Transverse colon (tissue), 4 donors: ENCODE measurements at regions of chr11 and their contacts with region 1.

Region 1: DNA sequence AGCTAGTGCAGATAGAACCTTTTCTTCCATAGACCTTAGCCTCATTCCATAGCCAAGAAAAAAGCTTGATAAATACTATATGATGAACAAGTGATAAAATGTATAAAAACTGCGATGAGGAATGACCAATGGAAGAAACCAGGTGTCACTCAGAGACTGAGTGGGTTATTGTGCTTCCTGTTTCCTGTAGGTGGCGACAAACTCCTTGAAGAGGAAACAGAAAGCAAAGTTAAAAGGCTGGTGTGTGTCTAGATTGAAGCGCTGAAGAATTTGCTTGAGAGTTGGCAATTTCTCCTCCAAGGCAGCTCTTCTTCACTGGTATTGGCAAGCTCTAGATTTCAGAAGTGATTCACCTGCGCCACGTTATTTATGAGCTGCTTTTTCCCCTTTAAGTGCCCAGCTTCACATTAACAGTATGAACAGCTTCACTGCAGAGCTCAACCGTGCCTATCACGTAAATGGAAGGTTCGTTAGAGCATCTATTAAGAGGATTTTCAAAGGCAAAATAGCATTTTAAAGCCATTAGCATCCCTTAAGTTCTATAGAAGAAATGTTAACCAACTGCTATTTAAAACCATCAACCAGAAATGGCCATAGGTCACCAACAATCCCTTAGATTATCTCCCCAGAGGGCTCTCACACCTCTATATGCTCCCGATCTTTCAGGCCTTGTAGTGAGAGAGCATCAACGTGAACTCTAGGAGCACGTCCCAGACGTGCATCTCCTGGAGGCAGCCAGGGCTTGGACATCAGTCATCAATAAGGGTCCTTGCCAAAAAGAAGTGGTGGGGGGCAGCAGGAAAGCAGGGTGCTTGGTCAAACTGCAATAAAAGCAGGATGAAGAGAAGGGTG is 179.4 kb downstream of the CADM1 start:
- DNase-seq: peak; percentile 18
- H3K4me3 ChIP-seq: peak overlapping the region in 1 of 4 donors; percentile 14
- H3K27ac ChIP-seq: no peak overlapping the region
- H3K4me1 ChIP-seq: peaks cover 0 to 4% (median 0%) of the 10 kb centered on the region in 4 donors
- H3K27me3 ChIP-seq: no peaks in the 10 kb centered on the region
- CTCF ChIP-seq: peak; percentile 69 to 77 (median 73)
- EP300 ChIP-seq: no peak
- POLR2A ChIP-seq: no peak

Region 2: DNA sequence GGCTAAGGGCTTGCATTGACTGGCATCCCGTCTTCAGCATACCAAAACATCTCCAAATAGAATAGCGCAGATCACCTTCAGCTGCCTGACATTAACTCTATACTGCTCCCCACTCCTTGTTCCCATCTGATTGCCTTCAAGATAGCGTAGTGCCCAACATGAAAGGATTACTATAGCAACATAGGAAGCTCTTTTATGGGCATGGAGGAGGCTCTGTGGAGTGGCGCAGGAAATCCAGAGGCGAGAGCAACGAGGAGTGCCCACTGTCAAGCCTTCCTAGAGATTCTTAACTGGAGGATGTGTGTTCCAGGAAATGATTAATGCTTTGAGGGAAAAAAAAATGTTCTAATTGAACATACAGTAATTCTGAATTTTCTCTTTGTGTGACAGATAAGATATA is 33.9 kb before region 1 on chr11:
- in situ Hi-C with region 1: no loop called
- intact Hi-C with region 1: no loop called
- DNase-seq: no peak
- H3K4me3 ChIP-seq: no peak overlapping the region
- H3K27ac ChIP-seq: no peak overlapping the region
- H3K4me1 ChIP-seq: no peaks in the 10 kb centered on the region
- H3K27me3 ChIP-seq: no peaks in the 10 kb centered on the region
- CTCF ChIP-seq: no peak
- EP300 ChIP-seq: no peak
- POLR2A ChIP-seq: no peak

Region 3: GRCh38 chr11:115421352-115421991 is 96.7 kb after region 1 on chr11:
- in situ Hi-C with region 1: no loop called
- intact Hi-C with region 1: no loop called
- DNase-seq: no peak
- H3K4me3 ChIP-seq: no peak overlapping the region
- H3K27ac ChIP-seq: no peak overlapping the region
- H3K4me1 ChIP-seq: no peaks in the 10 kb centered on the region
- H3K27me3 ChIP-seq: peaks cover 84% of the 10 kb centered on the region
- CTCF ChIP-seq: no peak
- EP300 ChIP-seq: no peak
- POLR2A ChIP-seq: no peak

Region 4: DNA sequence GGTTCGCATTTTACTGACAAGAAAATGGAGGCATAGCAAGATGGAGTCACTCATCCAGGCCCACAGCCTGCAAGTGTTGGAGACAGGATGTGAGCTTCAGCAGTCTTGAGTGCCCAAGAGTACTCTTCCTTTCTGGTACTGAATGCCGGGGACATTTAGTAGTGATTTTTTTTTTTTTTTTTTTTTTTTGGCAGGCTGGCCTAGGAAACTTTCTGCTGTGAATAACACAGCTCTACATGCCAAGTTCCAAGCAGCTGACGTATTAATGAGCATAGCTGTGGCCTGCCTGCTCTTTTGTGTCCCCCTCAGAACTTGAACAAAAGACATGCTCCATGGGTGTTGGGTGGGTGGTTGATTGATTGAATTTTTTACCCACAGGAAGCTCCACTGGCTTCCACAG is 374.9 kb after region 1 on chr11:
- in situ Hi-C with region 1: loop called in 3 of 4 experiments (anchors 25 kb)
- intact Hi-C with region 1: no loop called
- DNase-seq: no peak
- H3K4me3 ChIP-seq: no peak overlapping the region
- H3K27ac ChIP-seq: peak overlapping the region in 3 of 4 donors; percentile 31 to 58 (median 34)
- H3K4me1 ChIP-seq: peaks cover 0 to 18% (median 4%) of the 10 kb centered on the region in 4 donors
- H3K27me3 ChIP-seq: no peaks in the 10 kb centered on the region
- CTCF ChIP-seq: no peak
- EP300 ChIP-seq: no peak
- POLR2A ChIP-seq: no peak

Region 5: GRCh38 chr11:115784796-115785521 is 460.2 kb after region 1 on chr11:
- in situ Hi-C with region 1: no loop called
- intact Hi-C with region 1: loop called (anchors 5 kb)
- DNase-seq: peak; percentile 32
- H3K4me3 ChIP-seq: no peak overlapping the region
- H3K27ac ChIP-seq: no peak overlapping the region
- H3K4me1 ChIP-seq: no peaks in the 10 kb centered on the region
- H3K27me3 ChIP-seq: no peaks in the 10 kb centered on the region
- CTCF ChIP-seq: no peak
- EP300 ChIP-seq: no peak
- POLR2A ChIP-seq: no peak

Region 6: DNA sequence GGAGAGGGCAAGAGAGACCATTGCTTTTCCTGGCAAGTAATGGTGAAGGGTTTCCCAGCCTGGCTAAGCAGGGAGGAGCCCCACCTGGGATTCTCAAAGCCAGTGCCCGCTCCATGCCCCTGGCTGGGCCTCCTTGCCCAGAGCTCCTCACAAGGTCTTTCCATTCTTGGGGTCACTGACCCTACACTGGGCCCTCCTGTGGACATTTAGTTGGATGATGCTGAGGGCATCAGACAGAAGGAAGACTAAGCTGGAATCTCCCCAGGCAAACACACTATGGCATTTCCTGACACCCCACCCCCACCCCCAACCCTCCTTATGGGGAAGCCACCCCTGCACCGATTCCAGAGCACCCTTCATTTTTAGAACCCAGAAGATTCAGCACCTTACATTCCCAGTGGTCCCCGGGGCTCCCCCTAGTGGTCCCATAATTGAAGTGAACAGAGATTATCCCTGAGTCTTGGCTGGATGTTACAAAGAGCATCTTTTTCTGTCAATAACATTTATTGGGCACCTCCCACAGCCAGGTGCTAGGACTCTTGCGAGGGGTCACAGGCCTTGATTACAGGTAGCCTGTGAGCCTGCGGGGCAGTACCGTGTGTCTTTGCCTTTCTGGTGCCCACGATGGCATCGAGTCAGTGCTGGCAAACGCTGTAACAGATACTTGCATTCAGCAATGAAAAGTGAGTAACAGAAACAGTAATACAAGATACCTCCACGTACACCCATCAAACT is 899.5 kb after region 1 on chr11:
- in situ Hi-C with region 1: loop called in 2 of 4 experiments (anchors 25 kb)
- intact Hi-C with region 1: no loop called
- DNase-seq: peak; percentile 44
- H3K4me3 ChIP-seq: no peak overlapping the region
- H3K27ac ChIP-seq: no peak overlapping the region
- H3K4me1 ChIP-seq: no peaks in the 10 kb centered on the region
- H3K27me3 ChIP-seq: no peaks in the 10 kb centered on the region
- CTCF ChIP-seq: peak; percentile 42 to 72 (median 64)
- EP300 ChIP-seq: no peak
- POLR2A ChIP-seq: no peak

Region 7: GRCh38 chr11:116232364-116232828 is 907.6 kb after region 1 on chr11:
- in situ Hi-C with region 1: loop called in 1 of 4 experiments (anchors 25 kb)
- intact Hi-C with region 1: no loop called
- DNase-seq: peak; percentile 23
- H3K4me3 ChIP-seq: no peak overlapping the region
- H3K27ac ChIP-seq: peak overlapping the region in 1 of 4 donors; percentile 10
- H3K4me1 ChIP-seq: peaks cover 0 to 7% (median 0%) of the 10 kb centered on the region in 4 donors
- H3K27me3 ChIP-seq: no peaks in the 10 kb centered on the region
- CTCF ChIP-seq: no peak
- EP300 ChIP-seq: no peak
- POLR2A ChIP-seq: no peak

Region 8: GRCh38 chr11:116276051-116277044 is 951.5 kb after region 1 on chr11:
- in situ Hi-C with region 1: loop called in 2 of 4 experiments (anchors 10 to 25 kb)
- intact Hi-C with region 1: loop called (anchors 5 kb)
- DNase-seq: peak; percentile 86
- H3K4me3 ChIP-seq: peak overlapping the region in 3 of 4 donors; percentile 16 to 32 (median 20)
- H3K27ac ChIP-seq: no peak overlapping the region
- H3K4me1 ChIP-seq: peaks cover 0 to 4% (median 0%) of the 10 kb centered on the region in 4 donors
- H3K27me3 ChIP-seq: peaks cover 10% of the 10 kb centered on the region
- CTCF ChIP-seq: peak; percentile 80 to 99 (median 97)
- EP300 ChIP-seq: no peak
- POLR2A ChIP-seq: no peak

Region 9: DNA sequence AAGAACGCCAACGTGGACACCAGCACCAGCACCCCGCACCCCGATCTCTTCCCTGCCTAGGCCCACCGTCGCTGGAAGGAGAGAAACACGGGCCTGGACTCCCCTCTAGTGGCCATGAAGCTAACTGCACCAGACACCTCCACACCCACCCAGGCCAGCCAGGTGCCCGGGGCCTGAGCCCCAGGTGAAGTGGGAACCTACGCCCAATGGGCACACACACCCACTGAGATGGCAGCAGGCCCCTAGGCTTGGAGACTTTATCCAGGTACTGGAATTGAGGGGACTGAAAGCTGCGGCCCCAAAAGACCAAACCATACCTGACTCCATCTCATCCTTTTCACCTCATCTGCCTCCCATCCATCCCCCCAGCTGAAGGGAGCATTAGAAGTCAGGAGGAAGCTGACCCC is 1367.0 kb after region 1 on chr11:
- in situ Hi-C with region 1: loop called in 1 of 4 experiments (anchors 25 kb)
- intact Hi-C with region 1: no loop called
- DNase-seq: peak; percentile 44
- H3K4me3 ChIP-seq: no peak overlapping the region
- H3K27ac ChIP-seq: no peak overlapping the region
- H3K4me1 ChIP-seq: peaks cover 0 to 7% (median 2%) of the 10 kb centered on the region in 4 donors
- H3K27me3 ChIP-seq: no peaks in the 10 kb centered on the region
- CTCF ChIP-seq: peak; percentile 79 to 87 (median 81)
- EP300 ChIP-seq: no peak
- POLR2A ChIP-seq: no peak